ENCODE measurements at regions of chr17 and their contacts with region 1.

Region 1: GRCh38 chr17:32444308-32445073 is at the start of gene PSMD11:
- DNase-seq: peak; percentile 86 to 97
- H3K4me3 ChIP-seq: peak within 1 kb of the TSS; percentile 99
- H3K27ac ChIP-seq: peak within 1 kb of the TSS; percentile 76
- H3K4me1 ChIP-seq: peaks cover 24% of the 10 kb centered on the region
- H3K27me3 ChIP-seq: no peaks in the 10 kb centered on the region
- CTCF ChIP-seq: no peak; the same call in 1 of the 2 replicates
- total RNA-seq, gene PSMD11: 145 and 149 TPM in 2 replicates

Region 2: DNA sequence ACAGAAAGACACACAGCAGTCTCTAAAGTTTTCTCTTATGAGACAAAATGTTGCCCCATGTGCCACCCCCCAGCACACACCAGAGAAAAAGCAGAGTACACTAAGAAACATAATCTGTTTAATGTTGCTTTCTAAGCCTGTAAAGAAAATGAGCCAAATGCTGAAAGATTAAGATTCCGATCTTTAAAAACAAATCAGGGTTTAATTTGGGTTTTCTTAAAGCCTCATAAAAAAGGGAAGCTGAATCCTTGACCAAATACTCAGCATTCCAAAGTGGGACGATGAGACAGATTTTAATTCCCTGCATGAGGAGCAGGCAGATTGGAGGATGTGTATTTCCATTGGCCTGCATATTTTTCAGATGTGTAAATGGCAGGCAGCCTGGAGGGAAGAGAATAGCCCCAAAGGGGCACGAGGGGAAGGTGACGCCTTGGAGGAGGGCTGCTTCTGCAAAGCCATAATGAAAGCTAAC is 703.8 kb before region 1 on chr17:
- CTCF ChIA-PET with region 1: no interaction called
- POLR2A ChIA-PET with region 1: no interaction called
- intact Hi-C with region 1: no loop called
- DNase-seq: no peak
- H3K4me3 ChIP-seq: no peak overlapping the region
- H3K27ac ChIP-seq: no peak overlapping the region
- H3K4me1 ChIP-seq: no peaks in the 10 kb centered on the region
- H3K27me3 ChIP-seq: no peaks in the 10 kb centered on the region
- CTCF ChIP-seq: no peak

Region 3: DNA sequence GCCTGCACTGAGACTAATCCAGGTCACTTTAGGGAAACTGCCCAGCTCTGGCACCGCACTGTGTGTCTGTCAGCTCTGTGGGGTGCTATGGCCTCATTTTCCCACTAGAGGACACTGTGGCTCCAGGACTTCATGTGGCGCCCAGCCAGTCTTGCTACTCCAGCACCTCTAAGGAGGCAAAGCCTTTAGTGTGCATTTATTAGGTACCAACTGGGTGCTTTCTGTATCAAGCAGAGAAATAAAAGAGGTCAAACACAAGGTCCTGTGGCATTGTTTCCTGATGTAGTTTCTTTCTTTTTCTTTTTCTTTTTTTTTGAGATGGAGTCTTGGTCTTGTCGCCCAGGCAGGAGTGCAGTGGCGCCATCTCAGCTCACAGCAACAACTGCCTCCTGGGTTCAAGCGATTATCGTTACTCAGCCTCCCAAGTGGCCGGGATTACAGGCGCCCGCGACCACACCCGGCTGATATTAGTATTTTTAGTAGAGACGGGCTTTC is 191.3 kb before region 1 on chr17:
- CTCF ChIA-PET with region 1: no interaction called
- POLR2A ChIA-PET with region 1: no interaction called
- intact Hi-C with region 1: loop called (anchors 5 kb)
- DNase-seq: peak; percentile 50 to 77
- H3K4me3 ChIP-seq: no peak overlapping the region
- H3K27ac ChIP-seq: no peak overlapping the region
- H3K4me1 ChIP-seq: no peaks in the 10 kb centered on the region
- H3K27me3 ChIP-seq: no peaks in the 10 kb centered on the region
- CTCF ChIP-seq: peak; percentile 95

Region 4: GRCh38 chr17:32349854-32350665 is 94.4 kb before region 1 on chr17 and contains the start of gene ZNF207:
- CTCF ChIA-PET with region 1: no interaction called
- POLR2A ChIA-PET with region 1: no interaction called
- intact Hi-C with region 1: loop called (anchors 5 kb)
- DNase-seq: peak; percentile 84 to 92
- H3K4me3 ChIP-seq: peak within 1 kb of the TSS; percentile 68
- H3K27ac ChIP-seq: peak within 1 kb of the TSS; percentile 87
- H3K4me1 ChIP-seq: peaks cover 23% of the 10 kb centered on the region; the same call in 1 of the 2 replicates
- H3K27me3 ChIP-seq: no peaks in the 10 kb centered on the region
- CTCF ChIP-seq: no peak
- total RNA-seq, gene ZNF207: 186 and 198 TPM in 2 replicates

Region 5: GRCh38 chr17:32370426-32370825 is 74.1 kb before region 1 on chr17:
- CTCF ChIA-PET with region 1: interaction called, 11 read pairs
- POLR2A ChIA-PET with region 1: interaction called, 13 read pairs
- intact Hi-C with region 1: no loop called
- DNase-seq: no peak
- H3K4me3 ChIP-seq: no peak overlapping the region
- H3K27ac ChIP-seq: no peak overlapping the region
- H3K4me1 ChIP-seq: no peaks in the 10 kb centered on the region
- H3K27me3 ChIP-seq: no peaks in the 10 kb centered on the region
- CTCF ChIP-seq: no peak

Region 6: GRCh38 chr17:32877164-32877764 is 432.8 kb after region 1 on chr17:
- CTCF ChIA-PET with region 1: no interaction called
- POLR2A ChIA-PET with region 1: interaction called, 10 read pairs
- intact Hi-C with region 1: loop called (anchors 10 kb)
- DNase-seq: peak; percentile 60 to 96
- H3K4me3 ChIP-seq: peak overlapping the region; percentile 86; the same call in 1 of the 2 replicates
- H3K27ac ChIP-seq: no peak overlapping the region
- H3K4me1 ChIP-seq: peaks cover 14% of the 10 kb centered on the region
- H3K27me3 ChIP-seq: no peaks in the 10 kb centered on the region
- CTCF ChIP-seq: peak; percentile 66